Heart left ventricle (tissue), 16 donors: ENCODE measurements at regions of chr7 and their contacts with region 1.

Region 1: GRCh38 chr7:82572195-82572880 is 128.8 kb upstream of the CACNA2D1 start:
- DNase-seq: peak; percentile 79 to 87 (median 82)
- ATAC-seq: peak; percentile 83 to 94 (median 86)
- H3K4me3 ChIP-seq: peak overlapping the region in 2 of 12 donors; percentile 3 to 5
- H3K27ac ChIP-seq: no peak overlapping the region
- H3K4me1 ChIP-seq: peaks cover 0 to 9% (median 0%) of the 10 kb centered on the region in 12 donors
- H3K27me3 ChIP-seq: no peaks in the 10 kb centered on the region
- CTCF ChIP-seq: peak; percentile 78 to 97 (median 91)
- POLR2A ChIP-seq: no peak

Region 2: DNA sequence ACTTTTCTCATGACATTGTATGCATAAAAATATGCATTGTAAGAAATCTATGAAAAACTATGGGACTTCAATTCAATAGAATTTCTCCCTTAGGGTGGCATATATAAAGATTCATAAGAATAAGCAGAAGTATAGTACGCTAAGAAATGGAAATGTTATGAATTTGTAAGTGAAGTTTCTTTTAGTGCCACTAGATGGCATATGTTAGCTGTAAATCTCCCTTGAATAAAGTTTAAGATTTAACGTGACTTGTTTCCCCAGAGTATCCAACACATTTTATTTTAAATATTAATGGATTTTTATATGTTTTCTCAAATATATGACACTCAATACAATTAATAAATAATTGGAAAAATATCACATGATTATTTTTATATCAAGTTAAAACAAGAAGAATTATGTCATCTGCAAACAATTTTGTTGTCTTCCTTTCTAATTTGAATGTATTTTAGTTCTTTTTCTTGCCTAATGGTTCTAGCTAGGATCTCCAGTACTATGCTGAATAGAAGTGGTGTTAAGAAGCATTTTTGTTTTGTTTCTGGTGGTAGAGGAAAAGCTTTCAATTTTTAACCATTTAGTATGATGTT is 1089.6 kb before region 1 on chr7:
- intact Hi-C with region 1: loop called in 2 of 10 experiments (anchors 10 kb)
- DNase-seq: no peak
- ATAC-seq: peak in 1 of 4 donors; percentile 37
- H3K4me3 ChIP-seq: no peak overlapping the region
- H3K27ac ChIP-seq: no peak overlapping the region
- H3K4me1 ChIP-seq: peaks cover 0 to 21% (median 4%) of the 10 kb centered on the region in 12 donors
- H3K27me3 ChIP-seq: no peaks in the 10 kb centered on the region
- CTCF ChIP-seq: peak; percentile 51 to 79 (median 70)
- POLR2A ChIP-seq: no peak

Region 3: GRCh38 chr7:82044497-82045080 is 527.7 kb before region 1 on chr7:
- intact Hi-C with region 1: loop called (anchors 2 to 5 kb)
- DNase-seq: peak in 3 of 5 donors; percentile 23 to 36 (median 24)
- ATAC-seq: peak in 2 of 4 donors; percentile 32 to 62
- H3K4me3 ChIP-seq: no peak overlapping the region
- H3K27ac ChIP-seq: no peak overlapping the region
- H3K4me1 ChIP-seq: peaks cover 0 to 13% (median 5%) of the 10 kb centered on the region in 12 donors
- H3K27me3 ChIP-seq: no peaks in the 10 kb centered on the region
- CTCF ChIP-seq: peak; percentile 60 to 82 (median 70)
- POLR2A ChIP-seq: no peak

Region 4: GRCh38 chr7:82234457-82235049 is 337.8 kb before region 1 on chr7:
- intact Hi-C with region 1: loop called in 8 of 10 experiments (anchors 5 to 10 kb)
- DNase-seq: no peak
- ATAC-seq: peak in 1 of 4 donors; percentile 55
- H3K4me3 ChIP-seq: no peak overlapping the region
- H3K27ac ChIP-seq: no peak overlapping the region
- H3K4me1 ChIP-seq: peaks cover 0 to 23% (median 6%) of the 10 kb centered on the region in 12 donors
- H3K27me3 ChIP-seq: no peaks in the 10 kb centered on the region
- CTCF ChIP-seq: peak; percentile 37 to 74 (median 60)
- POLR2A ChIP-seq: no peak

Region 5: DNA sequence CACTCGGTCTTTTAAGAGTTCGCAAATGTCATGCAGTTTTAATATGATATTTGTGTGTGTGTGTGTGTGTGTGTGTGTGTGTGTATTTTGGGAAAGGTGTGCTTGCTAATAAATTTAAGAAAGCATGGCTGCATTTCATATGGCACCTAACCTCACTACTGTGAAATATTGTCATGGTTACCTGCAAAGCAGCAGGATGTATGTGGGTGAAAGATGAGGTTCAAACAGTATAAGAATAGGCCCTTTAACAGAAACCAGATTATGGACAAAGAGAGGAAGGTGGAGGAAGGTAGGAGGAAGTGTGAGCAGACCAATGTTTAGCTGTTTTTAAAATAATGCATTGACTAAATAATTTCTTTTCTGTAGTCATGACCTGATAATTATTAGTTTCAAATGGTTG is 55.3 kb before region 1 on chr7:
- intact Hi-C with region 1: loop called in 1 of 10 experiments (anchors 10 kb)
- DNase-seq: no peak
- ATAC-seq: no peak
- H3K4me3 ChIP-seq: no peak overlapping the region
- H3K27ac ChIP-seq: no peak overlapping the region
- H3K4me1 ChIP-seq: no peaks in the 10 kb centered on the region
- H3K27me3 ChIP-seq: no peaks in the 10 kb centered on the region
- CTCF ChIP-seq: no peak
- POLR2A ChIP-seq: no peak